Prostate gland (tissue), 2 donors: ENCODE measurements at regions of chr7 and their contacts with region 1.

Region 1: DNA sequence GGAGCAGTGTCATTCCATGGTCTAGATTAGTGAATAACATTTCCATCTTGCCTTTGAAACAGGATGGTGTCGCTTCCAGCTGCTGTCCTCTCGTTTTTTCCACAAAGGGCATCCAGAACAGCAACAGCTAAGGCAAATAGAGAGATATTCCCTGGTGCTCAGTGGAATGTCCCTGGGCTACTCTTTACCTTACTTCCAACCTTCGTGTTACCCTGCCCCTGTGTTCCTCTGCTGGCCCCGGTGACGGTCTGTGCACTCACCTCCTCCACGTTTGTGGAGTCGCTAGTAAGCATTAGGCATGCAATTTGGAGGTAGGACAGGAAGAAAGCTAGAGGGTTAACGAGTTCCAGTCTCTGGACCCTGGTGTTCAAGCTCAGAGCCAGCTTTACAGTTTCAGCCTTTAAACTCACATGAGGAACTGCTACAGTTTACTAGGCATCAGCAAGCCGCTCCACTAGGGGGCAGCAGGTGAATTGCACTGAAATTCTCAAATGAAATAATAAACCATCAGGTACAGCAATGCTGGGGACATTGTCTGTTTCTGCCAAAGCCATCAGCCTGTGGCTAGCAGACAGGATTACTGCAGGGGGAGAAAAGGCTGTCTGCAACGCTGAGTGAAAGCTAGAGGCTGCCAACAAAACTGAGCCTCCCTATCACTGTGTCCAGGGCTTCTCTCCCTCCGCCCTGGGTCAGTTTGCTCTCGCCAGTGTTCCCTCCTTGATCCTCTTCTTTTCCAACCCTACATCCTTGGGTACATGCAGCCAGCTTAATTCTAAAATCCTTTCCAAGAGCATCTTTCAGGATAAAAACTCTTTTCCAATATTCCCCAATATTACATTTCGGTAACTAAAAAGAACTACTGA is 9.0 kb downstream of the MRPL32 start:
- DNase-seq: peak; percentile 88
- H3K4me3 ChIP-seq: no peak overlapping the region
- H3K27ac ChIP-seq: no peak overlapping the region
- H3K4me1 ChIP-seq: no peaks in the 10 kb centered on the region
- H3K27me3 ChIP-seq: no peaks in the 10 kb centered on the region
- CTCF ChIP-seq: peak; percentile 43 to 83 (median 78)
- POLR2A ChIP-seq: no peak

Region 2: GRCh38 chr7:43260980-43261878 is 320.0 kb after region 1 on chr7:
- intact Hi-C with region 1: loop called (anchors 2 kb)
- DNase-seq: peak; percentile 65
- H3K4me3 ChIP-seq: no peak overlapping the region
- H3K27ac ChIP-seq: no peak overlapping the region
- H3K4me1 ChIP-seq: no peaks in the 10 kb centered on the region
- H3K27me3 ChIP-seq: no peaks in the 10 kb centered on the region
- CTCF ChIP-seq: peak; percentile 61 to 90 (median 73)
- POLR2A ChIP-seq: no peak

Region 3: GRCh38 chr7:43454936-43455518 is 513.8 kb after region 1 on chr7:
- intact Hi-C with region 1: loop called (anchors 10 kb)
- DNase-seq: no peak
- H3K4me3 ChIP-seq: no peak overlapping the region
- H3K27ac ChIP-seq: no peak overlapping the region
- H3K4me1 ChIP-seq: no peaks in the 10 kb centered on the region
- H3K27me3 ChIP-seq: no peaks in the 10 kb centered on the region
- CTCF ChIP-seq: peak in 3 of 4 experiments; percentile 17 to 41 (median 40)
- POLR2A ChIP-seq: no peak